ENCODE measurements at regions of chr20 and their contacts with region 1.

Region 1: GRCh38 chr20:16352321-16352720 is 220.9 kb downstream of the KIF16B start:
- DNase-seq: no peak
- H3K4me3 ChIP-seq: no peak overlapping the region
- H3K27ac ChIP-seq: no peak overlapping the region
- H3K4me1 ChIP-seq: no peaks in the 10 kb centered on the region
- H3K27me3 ChIP-seq: no peaks in the 10 kb centered on the region
- CTCF ChIP-seq: no peak
- EP300 ChIP-seq: no peak
- POLR2A ChIP-seq: no peak

Region 2: GRCh38 chr20:16337707-16338106 is 14.6 kb before region 1 on chr20:
- in situ Hi-C with region 1: no loop called
- intact Hi-C with region 1: no loop called
- DNase-seq: no peak
- H3K4me3 ChIP-seq: no peak overlapping the region
- H3K27ac ChIP-seq: no peak overlapping the region
- H3K4me1 ChIP-seq: no peaks in the 10 kb centered on the region
- H3K27me3 ChIP-seq: no peaks in the 10 kb centered on the region
- CTCF ChIP-seq: no peak
- EP300 ChIP-seq: no peak
- POLR2A ChIP-seq: no peak

Region 3: DNA sequence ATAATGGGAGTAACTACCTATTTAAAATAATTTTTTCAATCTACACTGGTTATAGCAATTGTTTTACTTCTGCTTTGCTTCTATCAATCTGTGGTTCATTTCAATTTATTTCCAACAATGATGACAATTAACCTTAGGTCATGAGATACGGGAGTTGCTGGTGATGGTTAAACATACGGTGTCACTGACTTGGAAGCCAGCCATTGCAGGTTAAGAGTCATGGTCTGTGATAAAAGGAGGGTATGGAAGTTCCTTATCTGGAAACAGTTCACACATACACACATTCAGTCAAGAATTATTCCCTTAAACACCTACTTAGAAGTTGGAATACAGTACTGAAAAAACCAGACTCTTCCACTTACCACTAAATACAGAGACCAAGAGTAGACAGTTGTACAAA is 41.0 kb after region 1 on chr20:
- in situ Hi-C with region 1: no loop called
- intact Hi-C with region 1: loop called (anchors 1 kb)
- DNase-seq: no peak
- H3K4me3 ChIP-seq: no peak overlapping the region
- H3K27ac ChIP-seq: no peak overlapping the region
- H3K4me1 ChIP-seq: peaks cover 0 to 21% (median 0%) of the 10 kb centered on the region in 4 donors
- H3K27me3 ChIP-seq: no peaks in the 10 kb centered on the region
- CTCF ChIP-seq: no peak
- EP300 ChIP-seq: no peak
- POLR2A ChIP-seq: no peak

Region 4: DNA sequence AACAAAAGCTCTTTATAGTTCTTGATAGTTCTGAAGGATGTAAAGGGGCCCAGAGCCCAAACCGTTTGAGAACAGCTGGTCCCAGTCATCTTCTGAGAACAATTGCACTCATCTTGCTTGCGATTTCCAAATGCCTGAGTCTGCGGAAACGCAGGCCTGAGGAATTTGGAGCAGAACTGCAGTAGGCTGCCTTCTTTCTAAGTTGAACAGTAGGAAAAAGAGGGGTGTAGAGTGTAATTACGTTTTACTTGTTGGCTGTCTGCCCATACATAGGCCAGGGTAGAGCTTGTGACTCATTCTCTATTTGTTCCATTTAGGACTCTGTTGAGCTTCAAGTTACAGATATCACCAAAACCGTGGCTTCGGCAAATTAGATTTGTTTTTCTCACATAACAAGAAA is 262.9 kb after region 1 on chr20:
- in situ Hi-C with region 1: no loop called
- intact Hi-C with region 1: no loop called
- DNase-seq: peak; percentile 15
- H3K4me3 ChIP-seq: no peak overlapping the region
- H3K27ac ChIP-seq: peak overlapping the region in 3 of 4 donors; percentile 4 to 34 (median 24)
- H3K4me1 ChIP-seq: peaks cover 0 to 30% (median 12%) of the 10 kb centered on the region in 4 donors
- H3K27me3 ChIP-seq: no peaks in the 10 kb centered on the region
- CTCF ChIP-seq: no peak
- EP300 ChIP-seq: no peak
- POLR2A ChIP-seq: no peak

Measured in transverse colon (tissue), 4 donors.